ENCODE measurements at regions of chr9 and their contacts with region 1.

Region 1: GRCh38 chr9:129202613-129203555 is 24.8 kb upstream of the IER5L start:
- DNase-seq: peak; percentile 85 to 99 (median 92)

Region 2: DNA sequence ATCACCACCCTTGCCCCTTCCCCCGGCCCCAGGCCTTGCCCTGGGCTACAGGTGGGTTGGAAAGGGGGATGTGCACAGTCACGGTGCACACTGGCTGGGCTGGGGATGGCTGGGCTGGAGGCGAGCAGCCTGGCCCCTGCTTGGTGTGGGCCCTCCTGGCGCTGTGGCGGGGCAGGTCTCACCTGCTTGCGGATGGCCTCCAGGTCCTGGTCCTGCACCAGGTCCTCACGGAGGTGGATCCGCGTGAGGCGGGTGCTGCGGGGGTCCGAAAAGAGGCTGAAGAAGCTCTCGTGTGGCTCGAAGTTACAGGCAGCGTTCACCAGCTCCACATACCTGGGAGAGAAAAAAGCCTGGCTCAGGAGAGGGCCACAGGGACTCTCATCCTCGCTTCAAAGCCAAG is 449.3 kb before region 1 on chr9:
- intact Hi-C with region 1: no loop called
- DNase-seq: peak in 1 of 10 donors; percentile 8

Region 3: DNA sequence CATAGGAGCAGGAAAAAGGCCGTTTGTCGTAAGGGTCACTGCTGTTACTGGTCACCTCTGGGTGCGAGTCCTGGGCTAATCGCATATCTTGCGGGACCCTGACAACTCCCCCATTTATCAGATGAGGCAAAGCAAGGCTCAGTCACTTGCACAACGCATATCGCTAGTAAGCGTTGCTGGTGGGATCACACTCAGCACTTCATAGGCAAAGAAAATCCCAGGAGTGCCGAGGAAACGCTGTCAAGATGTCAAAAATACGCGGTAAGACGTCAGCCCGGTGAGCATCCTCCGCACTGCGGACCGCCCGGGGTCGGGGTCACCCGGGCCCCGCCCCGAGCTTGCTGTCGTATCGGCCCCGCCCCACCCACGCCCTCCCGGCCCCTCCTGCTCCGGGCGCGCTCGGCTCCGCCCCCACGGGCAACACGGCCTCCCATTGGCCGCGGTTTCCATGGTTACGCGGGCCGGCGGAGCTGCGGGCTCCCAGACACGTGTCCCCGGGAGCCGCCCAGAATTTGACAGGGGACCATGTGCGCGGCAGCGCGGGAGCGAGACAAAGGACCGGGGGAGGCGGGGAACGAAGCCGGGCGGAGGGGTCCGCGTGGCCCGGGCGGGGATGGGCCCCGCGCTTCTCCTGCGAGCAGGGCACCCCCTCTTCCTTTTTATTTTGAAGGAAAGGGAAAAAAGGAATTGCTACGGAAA is 55.4 kb after region 1 on chr9:
- intact Hi-C with region 1: loop called (anchors 10 kb)
- DNase-seq: peak; percentile 81 to 100 (median 95)